OCI-LY7 (cell line): ENCODE measurements at regions of chr11 and their contacts with region 1.

Region 1: GRCh38 chr11:75814686-75815344 is at the start of gene UVRAG:
- DNase-seq: peak; percentile 99
- H3K4me3 ChIP-seq: peak within 1 kb of the TSS; percentile 92
- H3K27ac ChIP-seq: peak within 1 kb of the TSS; percentile 82
- H3K4me1 ChIP-seq: peaks cover 61% of the 10 kb centered on the region
- CTCF ChIP-seq: 0 out of 2 replicates have a peak, but pooled peaks have one; percentile 10
- total RNA-seq, gene UVRAG: 34.9 and 43.7 TPM in 2 replicates

Region 2: DNA sequence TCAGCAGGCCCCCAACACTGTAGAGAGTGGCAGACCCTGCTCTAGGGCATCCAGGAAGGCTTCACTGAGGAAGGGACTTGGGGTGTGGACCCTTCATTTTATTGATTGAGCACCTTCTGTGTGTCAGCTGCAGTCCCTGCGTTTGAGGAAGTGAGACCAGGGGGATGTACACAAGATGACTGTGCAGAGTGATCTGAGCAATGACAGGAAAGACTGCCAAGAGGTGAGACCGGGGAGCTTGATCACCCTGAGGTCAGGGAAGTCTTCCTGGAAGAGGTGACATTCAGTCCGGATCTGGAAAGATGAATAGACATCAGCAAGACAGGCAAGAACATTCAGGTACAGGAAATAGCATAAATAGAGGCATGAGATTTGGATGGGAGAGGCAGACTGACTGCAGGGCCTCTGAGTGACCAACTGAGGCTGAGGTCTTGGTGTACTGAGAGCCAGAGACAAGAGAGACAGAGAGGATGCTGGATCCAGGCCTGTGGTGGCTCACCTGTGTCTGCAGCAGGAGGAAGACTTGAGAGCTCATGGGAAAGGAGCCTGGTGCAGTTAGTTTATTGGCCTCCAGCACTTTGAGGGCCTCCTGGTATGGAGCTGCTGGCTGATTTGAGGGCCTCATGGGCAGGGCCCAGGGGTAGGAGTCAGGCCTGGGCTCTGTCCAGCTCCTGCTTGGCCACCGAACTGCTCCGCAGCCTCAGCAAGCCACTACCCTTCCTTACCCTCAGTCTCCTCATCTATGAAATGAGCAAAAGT is 41.0 kb before region 1 on chr11:
- CTCF ChIA-PET with region 1: no interaction called
- POLR2A ChIA-PET with region 1: interaction called, 4 read pairs
- intact Hi-C with region 1: loop called (anchors 1 kb)
- DNase-seq: peak; percentile 86
- H3K4me3 ChIP-seq: no peak overlapping the region
- H3K27ac ChIP-seq: peak overlapping the region; percentile 63
- H3K4me1 ChIP-seq: peaks cover 71% of the 10 kb centered on the region
- CTCF ChIP-seq: no peak

Region 3: GRCh38 chr11:75826461-75827230 is 11.8 kb after region 1 on chr11:
- CTCF ChIA-PET with region 1: no interaction called
- POLR2A ChIA-PET with region 1: interaction called, 18 read pairs
- intact Hi-C with region 1: no loop called
- DNase-seq: no peak
- H3K4me3 ChIP-seq: no peak overlapping the region
- H3K27ac ChIP-seq: peak overlapping the region; percentile 99
- H3K4me1 ChIP-seq: peaks cover 52% of the 10 kb centered on the region
- CTCF ChIP-seq: no peak

Region 4: GRCh38 chr11:75867775-75868374 is 53.1 kb after region 1 on chr11:
- CTCF ChIA-PET with region 1: no interaction called
- POLR2A ChIA-PET with region 1: interaction called, 12 read pairs
- intact Hi-C with region 1: loop called (anchors 2 kb)
- DNase-seq: peak; percentile 76
- H3K4me3 ChIP-seq: no peak overlapping the region
- H3K27ac ChIP-seq: no peak overlapping the region
- H3K4me1 ChIP-seq: peaks cover 21% of the 10 kb centered on the region
- CTCF ChIP-seq: peak; percentile 96

Region 5: GRCh38 chr11:75966546-75967287 is 151.9 kb after region 1 on chr11:
- CTCF ChIA-PET with region 1: no interaction called
- POLR2A ChIA-PET with region 1: no interaction called
- intact Hi-C with region 1: no loop called
- DNase-seq: no peak
- H3K4me3 ChIP-seq: no peak overlapping the region
- H3K27ac ChIP-seq: no peak overlapping the region
- H3K4me1 ChIP-seq: no peaks in the 10 kb centered on the region
- CTCF ChIP-seq: no peak

Region 6: GRCh38 chr11:76161261-76161961 is 346.6 kb after region 1 on chr11:
- CTCF ChIA-PET with region 1: no interaction called
- POLR2A ChIA-PET with region 1: no interaction called
- intact Hi-C with region 1: no loop called
- DNase-seq: no peak
- H3K4me3 ChIP-seq: no peak overlapping the region
- H3K27ac ChIP-seq: no peak overlapping the region
- H3K4me1 ChIP-seq: no peaks in the 10 kb centered on the region
- CTCF ChIP-seq: no peak